PC-9 (cell line): ENCODE measurements at regions of chr2 and their contacts with region 1.

Region 1: GRCh38 chr2:170928824-170929685 is at the start of gene GORASP2:
- DNase-seq: peak; percentile 98 to 99
- H3K4me3 ChIP-seq: peak within 1 kb of the TSS; percentile 94
- H3K27ac ChIP-seq: peak within 1 kb of the TSS; percentile 89
- H3K4me1 ChIP-seq: peaks cover 29% of the 10 kb centered on the region
- H3K27me3 ChIP-seq: no peaks in the 10 kb centered on the region
- CTCF ChIP-seq: peak; percentile 93
- total RNA-seq, gene GORASP2: 74.7 and 110 TPM in 2 replicates

Region 2: GRCh38 chr2:170823088-170823897 is 105.8 kb before region 1 on chr2:
- CTCF ChIA-PET with region 1: no interaction called
- POLR2A ChIA-PET with region 1: no interaction called
- intact Hi-C with region 1: no loop called
- DNase-seq: no peak
- H3K4me3 ChIP-seq: no peak overlapping the region
- H3K27ac ChIP-seq: no peak overlapping the region
- H3K4me1 ChIP-seq: no peaks in the 10 kb centered on the region
- H3K27me3 ChIP-seq: no peaks in the 10 kb centered on the region
- CTCF ChIP-seq: no peak

Region 3: GRCh38 chr2:170862286-170862902 is 66.7 kb before region 1 on chr2:
- CTCF ChIA-PET with region 1: no interaction called
- POLR2A ChIA-PET with region 1: no interaction called
- intact Hi-C with region 1: no loop called
- DNase-seq: no peak
- H3K4me3 ChIP-seq: no peak overlapping the region
- H3K27ac ChIP-seq: no peak overlapping the region
- H3K4me1 ChIP-seq: no peaks in the 10 kb centered on the region
- H3K27me3 ChIP-seq: no peaks in the 10 kb centered on the region
- CTCF ChIP-seq: no peak

Region 4: GRCh38 chr2:170873035-170873692 is 55.9 kb before region 1 on chr2:
- CTCF ChIA-PET with region 1: no interaction called
- POLR2A ChIA-PET with region 1: no interaction called
- intact Hi-C with region 1: loop called (anchors 2 kb)
- DNase-seq: peak; percentile 52 to 77
- H3K4me3 ChIP-seq: peak overlapping the region; percentile 18; the same call in 1 of the 2 replicates
- H3K27ac ChIP-seq: no peak overlapping the region
- H3K4me1 ChIP-seq: no peaks in the 10 kb centered on the region
- H3K27me3 ChIP-seq: peaks cover 3% of the 10 kb centered on the region
- CTCF ChIP-seq: peak; percentile 93

Region 5: DNA sequence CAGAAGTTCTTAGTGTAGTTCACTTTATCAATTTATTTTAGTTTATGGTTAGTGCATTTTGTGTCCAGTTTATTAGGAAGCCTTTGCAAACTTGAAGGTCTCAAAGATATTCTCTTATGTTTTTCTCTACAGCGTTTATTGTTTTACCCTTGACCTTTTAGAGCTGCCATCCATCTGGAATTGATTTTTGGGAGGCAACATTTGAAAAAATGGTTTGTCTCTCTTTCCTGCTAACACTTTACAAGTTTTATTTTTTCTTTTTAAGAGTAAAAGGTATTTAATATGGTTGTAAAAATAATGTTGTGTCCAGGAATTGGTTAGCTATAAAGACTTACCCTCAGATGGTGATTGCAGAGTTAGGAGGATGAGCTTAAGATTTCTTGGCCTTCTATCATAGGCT is 14.0 kb after region 1 on chr2:
- CTCF ChIA-PET with region 1: no interaction called
- POLR2A ChIA-PET with region 1: interaction called, 14 read pairs
- intact Hi-C with region 1: no loop called
- DNase-seq: no peak
- H3K4me3 ChIP-seq: no peak overlapping the region
- H3K27ac ChIP-seq: no peak overlapping the region
- H3K4me1 ChIP-seq: no peaks in the 10 kb centered on the region
- H3K27me3 ChIP-seq: no peaks in the 10 kb centered on the region
- CTCF ChIP-seq: no peak

Region 6: DNA sequence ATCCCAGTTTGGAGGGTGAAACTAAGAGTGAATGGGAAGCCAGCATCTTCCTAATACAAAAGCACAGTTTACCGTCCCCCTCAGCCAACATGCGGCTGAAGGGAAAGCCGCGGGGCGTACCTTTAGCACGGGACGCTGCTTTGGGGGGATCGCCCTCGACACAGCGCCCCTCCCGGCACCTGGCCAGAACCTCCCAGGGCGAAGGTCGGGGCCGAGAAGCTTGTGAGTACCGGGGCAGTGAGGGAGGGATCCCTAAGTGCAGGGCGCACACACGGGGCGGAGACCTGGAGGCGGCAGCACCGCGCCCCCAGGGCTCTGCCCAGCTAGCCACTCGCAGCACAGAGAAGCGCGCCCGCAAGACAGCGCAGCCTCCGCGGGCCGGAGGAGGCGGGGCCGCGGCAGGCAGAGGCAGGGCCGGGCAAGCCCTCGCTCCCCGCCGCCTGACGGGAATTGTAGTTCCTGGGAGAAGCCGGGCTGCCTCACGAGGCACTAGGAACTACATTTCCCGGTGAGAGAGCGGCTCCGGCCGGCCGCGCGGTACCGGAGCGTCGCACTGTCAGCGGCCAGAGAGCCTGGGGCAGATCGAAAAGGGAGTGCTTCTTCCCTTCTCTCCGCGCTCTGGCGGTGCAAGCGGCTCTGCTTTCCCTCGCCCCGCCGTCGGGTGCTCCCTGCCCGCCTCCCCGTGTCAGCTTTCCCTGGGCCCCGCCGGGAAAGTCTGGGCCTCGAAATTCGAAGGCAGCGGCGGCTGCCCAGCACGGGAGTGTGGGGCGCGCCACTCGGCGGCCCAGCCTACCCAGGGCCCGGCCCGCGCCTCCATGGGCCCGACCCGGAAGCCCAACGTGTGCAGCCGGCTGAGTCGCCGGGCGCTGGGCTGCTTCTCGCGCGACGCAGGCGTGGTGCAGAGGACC is 505.0 kb after region 1 on chr2 and contains the starts of genes DCAF17 and METTL8:
- CTCF ChIA-PET with region 1: interaction called, 3 read pairs
- POLR2A ChIA-PET with region 1: no interaction called
- intact Hi-C with region 1: loop called (anchors 1 kb)
- DNase-seq: peak; percentile 95 to 98
- H3K4me3 ChIP-seq: peak within 1 kb of the TSS; percentile 64
- H3K27ac ChIP-seq: peak within 1 kb of the TSS; percentile 93
- H3K4me1 ChIP-seq: peaks cover 25% of the 10 kb centered on the region
- H3K27me3 ChIP-seq: no peaks in the 10 kb centered on the region
- CTCF ChIP-seq: peak; percentile 50
- total RNA-seq, gene DCAF17: 22.0 and 22.1 TPM in 2 replicates
- total RNA-seq, gene METTL8: 21.8 and 24.3 TPM in 2 replicates

Region 7: GRCh38 chr2:171522052-171522787 is 593.2 kb after region 1 on chr2 and contains the start of gene CYBRD1:
- CTCF ChIA-PET with region 1: no interaction called
- POLR2A ChIA-PET with region 1: no interaction called
- intact Hi-C with region 1: loop called (anchors 2 kb)
- DNase-seq: peak; percentile 66 to 92
- H3K4me3 ChIP-seq: peak within 1 kb of the TSS; percentile 83
- H3K27ac ChIP-seq: peak within 1 kb of the TSS; percentile 81
- H3K4me1 ChIP-seq: peaks cover 21% of the 10 kb centered on the region
- H3K27me3 ChIP-seq: no peaks in the 10 kb centered on the region
- CTCF ChIP-seq: no peak
- total RNA-seq, gene CYBRD1: 125 and 132 TPM in 2 replicates

Region 8: GRCh38 chr2:171687287-171688128 is 758.5 kb after region 1 on chr2 and contains the start of gene DYNC1I2:
- CTCF ChIA-PET with region 1: no interaction called
- POLR2A ChIA-PET with region 1: no interaction called
- intact Hi-C with region 1: loop called (anchors 5 kb)
- DNase-seq: peak; percentile 95 to 96
- H3K4me3 ChIP-seq: peak within 1 kb of the TSS; percentile 65
- H3K27ac ChIP-seq: peak within 1 kb of the TSS; percentile 65
- H3K4me1 ChIP-seq: peaks cover 11% of the 10 kb centered on the region
- H3K27me3 ChIP-seq: 0 out of 2 replicates have a peak, but pooled peaks cover 4% of the 10 kb centered on the region
- CTCF ChIP-seq: no peak
- total RNA-seq, gene DYNC1I2: 140 and 151 TPM in 2 replicates